ENCODE measurements at regions of chr1 and their contacts with region 1.

Region 1: GRCh38 chr1:35079003-35079930 is at the start of gene ZMYM1:
- DNase-seq: peak; percentile 97
- H3K4me3 ChIP-seq: peak within 1 kb of the TSS; percentile 64 to 80 (median 69)
- H3K27ac ChIP-seq: peak within 1 kb of the TSS; percentile 84 to 92 (median 90)
- H3K4me1 ChIP-seq: peaks cover 15 to 21% (median 19%) of the 10 kb centered on the region in 4 donors
- H3K27me3 ChIP-seq: peaks cover 0 to 5% (median 0%) of the 10 kb centered on the region in 4 donors
- CTCF ChIP-seq: no peak
- EP300 ChIP-seq: no peak
- POLR2A ChIP-seq: no peak
- total RNA-seq, gene ZMYM1: 7.3 to 19.1 (median 14.5) TPM

Region 2: DNA sequence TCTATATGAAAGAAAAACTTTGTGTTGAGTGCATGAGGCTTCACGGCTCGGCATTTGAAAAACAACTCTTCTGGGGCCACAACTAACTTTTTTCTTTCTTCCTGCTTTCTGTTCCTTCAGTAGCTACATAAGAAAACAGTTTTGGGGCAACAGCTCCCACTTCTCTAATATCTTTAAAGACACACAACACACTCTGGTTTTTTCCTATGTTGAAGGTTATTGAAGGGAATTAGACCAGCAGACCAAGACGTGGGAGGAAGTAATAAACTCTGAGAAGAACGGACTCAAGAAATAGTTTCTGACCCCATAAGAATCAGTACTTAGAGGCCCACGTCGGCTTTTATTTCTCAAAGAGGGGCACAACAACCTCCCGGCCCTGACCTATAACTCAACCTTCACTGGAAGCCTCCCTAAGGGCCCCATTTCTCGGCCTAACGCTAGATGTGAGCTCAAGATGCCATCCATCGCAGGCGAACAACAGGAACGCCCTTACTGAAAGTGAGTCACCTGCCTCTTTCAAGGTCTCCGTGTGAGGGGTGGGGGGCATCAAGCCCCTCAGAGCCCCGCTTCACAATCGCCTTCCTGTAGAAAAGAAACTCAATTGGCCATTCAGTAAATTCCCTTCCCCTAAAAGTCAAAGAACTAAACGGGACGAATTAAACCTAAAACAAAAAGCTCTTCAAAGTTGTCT is 48.4 kb before region 1 on chr1:
- intact Hi-C with region 1: loop called (anchors 2 kb)
- DNase-seq: no peak
- H3K4me3 ChIP-seq: peak overlapping the region; percentile 67 to 86 (median 74)
- H3K27ac ChIP-seq: peak overlapping the region; percentile 89 to 93 (median 91)
- H3K4me1 ChIP-seq: peaks cover 11 to 38% (median 26%) of the 10 kb centered on the region in 4 donors
- H3K27me3 ChIP-seq: no peaks in the 10 kb centered on the region
- CTCF ChIP-seq: no peak
- EP300 ChIP-seq: no peak
- POLR2A ChIP-seq: no peak

Measured in esophagus muscularis mucosa (tissue), 4 donors.